ENCODE measurements at regions of chr7 and their contacts with region 1.

Region 1: GRCh38 chr7:72183684-72184234 is 228.4 kb downstream of the CALN1 start:
- DNase-seq: peak; percentile 6
- ATAC-seq: no peak
- H3K4me3 ChIP-seq: no peak overlapping the region
- H3K27ac ChIP-seq: no peak overlapping the region
- H3K4me1 ChIP-seq: no peaks in the 10 kb centered on the region
- H3K27me3 ChIP-seq: no peaks in the 10 kb centered on the region
- CTCF ChIP-seq: no peak
- EP300 ChIP-seq: no peak
- POLR2A ChIP-seq: no peak
- RAD21 ChIP-seq: no peak

Region 2: DNA sequence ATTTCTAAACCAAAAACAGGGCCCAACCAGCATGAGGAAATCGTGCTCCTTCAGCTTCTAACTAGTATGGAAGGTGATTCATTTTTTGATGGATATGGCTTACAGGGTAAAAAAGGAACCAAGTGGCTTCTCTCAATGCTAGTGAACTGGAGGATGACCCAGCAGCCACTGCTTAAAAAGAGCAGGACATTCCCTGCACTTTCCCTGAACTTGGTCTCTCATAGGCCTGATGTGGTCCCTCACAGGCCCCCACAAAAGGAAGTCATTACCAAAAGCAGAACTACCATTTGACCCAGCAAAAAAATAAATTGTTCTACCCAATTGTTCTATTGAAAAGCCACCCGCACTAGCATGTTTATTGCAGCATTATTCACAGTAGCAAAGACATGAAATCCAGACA is 39.6 kb after region 1 on chr7:
- CTCF ChIA-PET with region 1: no interaction called
- POLR2A ChIA-PET with region 1: no interaction called
- in situ Hi-C with region 1: no loop called
- intact Hi-C with region 1: no loop called
- DNase-seq: no peak
- ATAC-seq: no peak
- H3K4me3 ChIP-seq: no peak overlapping the region
- H3K27ac ChIP-seq: no peak overlapping the region
- H3K4me1 ChIP-seq: no peaks in the 10 kb centered on the region
- H3K27me3 ChIP-seq: no peaks in the 10 kb centered on the region
- CTCF ChIP-seq: no peak
- EP300 ChIP-seq: no peak
- POLR2A ChIP-seq: no peak
- RAD21 ChIP-seq: no peak

Region 3: GRCh38 chr7:72785166-72785955 is 601.6 kb after region 1 on chr7:
- CTCF ChIA-PET with region 1: no interaction called
- POLR2A ChIA-PET with region 1: no interaction called
- in situ Hi-C with region 1: no loop called
- intact Hi-C with region 1: loop called (anchors 10 kb)
- DNase-seq: no peak
- ATAC-seq: no peak
- H3K4me3 ChIP-seq: no peak overlapping the region
- H3K27ac ChIP-seq: no peak overlapping the region
- H3K4me1 ChIP-seq: peaks cover 4% of the 10 kb centered on the region
- H3K27me3 ChIP-seq: no peaks in the 10 kb centered on the region
- CTCF ChIP-seq: no peak
- EP300 ChIP-seq: no peak
- POLR2A ChIP-seq: no peak
- RAD21 ChIP-seq: no peak